ENCODE measurements at regions of chr4 and their contacts with region 1.

Region 1: GRCh38 chr4:145808021-145808650 is 128.2 kb downstream of the C4orf51 start:
- DNase-seq: peak in 1 of 9 donors; percentile 43
- ATAC-seq: peak; percentile 61
- H3K4me3 ChIP-seq: no peak overlapping the region
- H3K4me3 Mint-ChIP-seq: peak overlapping the region in 2 of 10 donors; percentile 13 to 81
- H3K27ac ChIP-seq: no peak overlapping the region
- H3K27ac Mint-ChIP-seq: peak overlapping the region in 2 of 9 donors; percentile 25 to 98
- H3K4me1 ChIP-seq: no peaks in the 10 kb centered on the region
- H3K4me1 Mint-ChIP-seq: peaks cover 0 to 38% (median 0%) of the 10 kb centered on the region in 7 donors
- H3K27me3 ChIP-seq: no peaks in the 10 kb centered on the region
- H3K27me3 Mint-ChIP-seq: no peaks in the 10 kb centered on the region

Region 2: GRCh38 chr4:145769450-145770037 is 38.6 kb before region 1 on chr4:
- CTCF ChIA-PET with region 1: no interaction called
- POLR2A ChIA-PET with region 1: no interaction called
- intact Hi-C with region 1: loop called in 1 of 2 experiments (anchors 5 kb)
- DNase-seq: no peak
- ATAC-seq: no peak
- H3K4me3 ChIP-seq: no peak overlapping the region
- H3K4me3 Mint-ChIP-seq: no peak overlapping the region
- H3K27ac ChIP-seq: no peak overlapping the region
- H3K27ac Mint-ChIP-seq: no peak overlapping the region
- H3K4me1 ChIP-seq: no peaks in the 10 kb centered on the region
- H3K4me1 Mint-ChIP-seq: peaks cover 0 to 21% (median 0%) of the 10 kb centered on the region in 7 donors
- H3K27me3 ChIP-seq: no peaks in the 10 kb centered on the region
- H3K27me3 Mint-ChIP-seq: no peaks in the 10 kb centered on the region

Region 3: DNA sequence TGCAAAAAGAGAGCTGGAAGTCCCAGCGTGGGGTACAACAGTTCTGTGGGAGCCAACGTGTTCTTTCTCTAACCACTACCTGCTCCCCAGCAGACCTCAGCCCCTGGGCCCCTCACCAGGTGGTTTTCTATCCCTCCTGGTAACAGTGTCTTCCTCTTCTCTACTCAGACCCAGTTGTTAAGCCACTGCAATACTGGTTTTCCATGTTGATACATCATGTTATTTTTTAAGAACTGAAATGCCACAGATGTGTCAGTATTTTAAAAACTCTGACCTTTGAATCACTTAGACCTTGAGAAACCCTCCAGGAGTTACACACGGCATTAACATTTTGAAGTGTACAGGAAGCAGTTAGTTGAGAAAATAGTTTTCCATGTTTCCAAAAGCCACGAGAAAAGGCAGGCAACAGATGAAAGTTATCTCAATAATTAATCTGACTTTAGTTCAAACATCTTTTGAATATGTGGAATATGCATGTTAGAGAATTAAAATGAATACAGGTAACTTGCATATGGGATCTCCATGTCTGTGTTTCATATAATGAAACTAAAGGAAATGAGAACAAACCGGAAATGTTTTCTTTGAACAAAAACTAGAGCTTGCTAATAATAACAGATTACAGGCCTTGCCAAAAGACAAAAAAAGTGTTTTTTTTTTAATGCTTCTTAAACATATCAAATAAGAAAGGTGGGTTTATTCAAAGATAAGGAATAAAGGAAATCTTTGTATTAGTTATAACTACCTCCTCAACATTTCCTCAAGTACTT is 21.7 kb after region 1 on chr4:
- CTCF ChIA-PET with region 1: no interaction called
- POLR2A ChIA-PET with region 1: no interaction called
- intact Hi-C with region 1: loop called in 1 of 2 experiments (anchors 1 kb)
- DNase-seq: peak in 1 of 9 donors; percentile 58
- ATAC-seq: no peak
- H3K4me3 ChIP-seq: peak overlapping the region; percentile 1
- H3K4me3 Mint-ChIP-seq: peak overlapping the region in 9 of 10 donors; percentile 43 to 83 (median 67)
- H3K27ac ChIP-seq: peak overlapping the region; percentile 40
- H3K27ac Mint-ChIP-seq: peak overlapping the region; percentile 25 to 92 (median 80)
- H3K4me1 ChIP-seq: peaks cover 8 to 9% of the 10 kb centered on the region in 2 donors
- H3K4me1 Mint-ChIP-seq: peaks cover 6 to 39% (median 31%) of the 10 kb centered on the region in 7 donors
- H3K27me3 ChIP-seq: no peaks in the 10 kb centered on the region
- H3K27me3 Mint-ChIP-seq: no peaks in the 10 kb centered on the region

Region 4: DNA sequence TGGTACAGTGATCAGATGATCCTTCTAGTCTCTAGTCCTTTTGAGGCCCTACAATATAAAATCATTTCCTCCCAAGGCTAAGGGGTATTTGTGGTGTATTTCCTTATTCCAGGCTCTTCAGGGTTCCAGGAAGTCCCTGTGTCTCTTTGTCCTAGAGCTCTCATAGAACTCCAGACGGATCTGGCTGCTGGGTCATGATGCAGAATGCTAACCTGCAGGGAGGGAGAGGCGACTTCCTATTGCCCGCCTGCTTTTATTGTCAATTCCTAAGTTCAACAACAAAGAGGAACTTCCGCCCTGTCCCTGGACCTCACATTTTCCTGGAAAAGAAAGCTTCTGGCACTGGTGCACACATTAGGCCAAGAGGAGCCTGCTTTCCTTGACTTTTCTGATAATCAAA is 176.4 kb after region 1 on chr4:
- CTCF ChIA-PET with region 1: no interaction called
- POLR2A ChIA-PET with region 1: no interaction called
- intact Hi-C with region 1: no loop called
- DNase-seq: no peak
- ATAC-seq: no peak
- H3K4me3 ChIP-seq: no peak overlapping the region
- H3K4me3 Mint-ChIP-seq: no peak overlapping the region
- H3K27ac ChIP-seq: no peak overlapping the region
- H3K27ac Mint-ChIP-seq: no peak overlapping the region
- H3K4me1 ChIP-seq: no peaks in the 10 kb centered on the region
- H3K4me1 Mint-ChIP-seq: no peaks in the 10 kb centered on the region
- H3K27me3 ChIP-seq: no peaks in the 10 kb centered on the region
- H3K27me3 Mint-ChIP-seq: peaks cover 0 to 18% (median 5%) of the 10 kb centered on the region in 5 donors